Mammary epithelial cell (primary cell): ENCODE measurements at regions of chr16 and their contacts with region 1.

Region 1: GRCh38 chr16:27235055-27235937 is 32.0 kb downstream of the KDM8 start:
- DNase-seq: peak; percentile 78
- H3K4me3 ChIP-seq: no peak overlapping the region
- H3K27ac ChIP-seq: peak overlapping the region; percentile 26
- H3K4me1 ChIP-seq: peaks cover 25% of the 10 kb centered on the region
- H3K27me3 ChIP-seq: no peaks in the 10 kb centered on the region
- CTCF ChIP-seq: peak; percentile 93 to 96

Region 2: DNA sequence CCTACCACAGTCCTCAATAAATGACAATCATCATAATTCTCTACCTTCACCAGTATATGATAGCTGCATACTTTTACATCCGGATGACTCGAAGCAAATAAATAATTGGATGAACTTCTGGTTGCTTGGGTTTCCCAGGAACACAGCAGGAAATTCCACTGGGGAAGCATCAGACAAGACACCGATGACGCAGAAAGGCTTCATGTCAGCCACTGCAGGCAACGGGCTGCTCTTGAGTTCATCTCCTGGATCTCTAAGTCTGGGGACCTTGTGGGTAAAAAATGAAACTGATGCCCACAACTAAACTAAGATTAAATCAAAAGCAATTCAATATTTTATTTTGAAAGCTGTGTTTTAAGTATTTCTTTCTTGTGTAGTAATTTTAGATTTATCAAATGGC is 640.6 kb before region 1 on chr16:
- CTCF ChIA-PET with region 1: no interaction called
- dilution Hi-C with region 1: no loop called
- in situ Hi-C with region 1: no loop called
- intact Hi-C with region 1: no loop called
- DNase-seq: no peak
- H3K4me3 ChIP-seq: no peak overlapping the region
- H3K27ac ChIP-seq: no peak overlapping the region
- H3K4me1 ChIP-seq: no peaks in the 10 kb centered on the region
- H3K27me3 ChIP-seq: no peaks in the 10 kb centered on the region
- CTCF ChIP-seq: no peak

Region 3: DNA sequence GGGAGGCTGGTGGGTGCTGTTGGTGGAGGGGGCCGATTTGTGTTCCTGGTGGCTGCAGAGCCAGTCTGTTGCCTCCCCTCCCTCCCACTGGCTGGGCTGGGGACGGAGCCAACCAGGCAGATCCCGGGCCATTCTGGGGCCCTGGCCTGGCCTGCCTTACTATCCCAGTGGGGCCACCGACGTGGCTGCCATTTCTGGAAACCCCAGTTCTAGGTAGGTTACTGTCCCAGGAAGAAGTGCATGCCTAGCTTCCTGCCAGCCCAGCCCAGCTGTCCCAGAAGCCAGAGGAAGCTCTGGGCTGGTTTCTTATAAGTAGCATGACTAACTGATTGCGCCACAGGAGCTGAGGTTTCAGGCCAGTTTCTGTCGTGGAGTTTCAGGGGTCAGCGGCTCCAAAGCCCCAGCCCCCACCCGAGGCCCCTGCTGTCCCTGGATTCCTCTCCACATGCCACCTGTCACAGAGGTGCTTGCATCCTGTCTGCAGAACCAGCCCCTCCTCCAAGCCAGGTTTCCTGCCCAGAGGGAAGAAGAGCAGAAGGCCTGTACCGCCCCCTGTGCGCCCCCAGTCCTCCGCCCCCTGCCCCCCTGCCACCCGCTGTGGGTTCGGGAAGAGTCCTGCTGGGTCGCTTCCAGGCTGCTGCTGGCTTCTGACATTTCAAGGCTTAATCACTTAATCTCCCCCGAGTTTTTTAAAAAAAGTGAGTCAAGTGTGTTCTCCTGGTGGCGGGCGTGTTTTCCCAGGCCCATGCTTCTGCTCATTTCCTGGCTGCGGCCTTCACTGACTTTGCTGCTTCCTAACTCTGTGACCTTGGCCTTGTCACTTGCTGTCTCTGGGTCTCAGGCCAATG is 91.7 kb after region 1 on chr16:
- CTCF ChIA-PET with region 1: no interaction called
- dilution Hi-C with region 1: no loop called
- in situ Hi-C with region 1: no loop called
- intact Hi-C with region 1: loop called (anchors 1 kb)
- DNase-seq: peak; percentile 96
- H3K4me3 ChIP-seq: no peak overlapping the region
- H3K27ac ChIP-seq: peak overlapping the region; percentile 92
- H3K4me1 ChIP-seq: peaks cover 66% of the 10 kb centered on the region
- H3K27me3 ChIP-seq: no peaks in the 10 kb centered on the region
- CTCF ChIP-seq: peak in 1 of 2 donors; percentile 8

Region 4: GRCh38 chr16:27449434-27450195 is 214.3 kb after region 1 on chr16:
- CTCF ChIA-PET with region 1: no interaction called
- dilution Hi-C with region 1: no loop called
- in situ Hi-C with region 1: loop called in 1 of 2 experiments (anchors 25 kb)
- intact Hi-C with region 1: no loop called
- DNase-seq: no peak
- H3K4me3 ChIP-seq: no peak overlapping the region
- H3K27ac ChIP-seq: no peak overlapping the region
- H3K4me1 ChIP-seq: no peaks in the 10 kb centered on the region
- H3K27me3 ChIP-seq: no peaks in the 10 kb centered on the region
- CTCF ChIP-seq: no peak

Region 5: GRCh38 chr16:27461483-27462171 is 226.3 kb after region 1 on chr16:
- CTCF ChIA-PET with region 1: no interaction called
- dilution Hi-C with region 1: no loop called
- in situ Hi-C with region 1: loop called in 1 of 2 experiments (anchors 25 kb)
- intact Hi-C with region 1: loop called (anchors 1 kb)
- DNase-seq: no peak
- H3K4me3 ChIP-seq: no peak overlapping the region
- H3K27ac ChIP-seq: no peak overlapping the region
- H3K4me1 ChIP-seq: peaks cover 12% of the 10 kb centered on the region
- H3K27me3 ChIP-seq: no peaks in the 10 kb centered on the region
- CTCF ChIP-seq: no peak